Right ventricle myocardium inferior (tissue), 1 donor: ENCODE measurements at regions of chr1 and their contacts with region 1.

Region 1: DNA sequence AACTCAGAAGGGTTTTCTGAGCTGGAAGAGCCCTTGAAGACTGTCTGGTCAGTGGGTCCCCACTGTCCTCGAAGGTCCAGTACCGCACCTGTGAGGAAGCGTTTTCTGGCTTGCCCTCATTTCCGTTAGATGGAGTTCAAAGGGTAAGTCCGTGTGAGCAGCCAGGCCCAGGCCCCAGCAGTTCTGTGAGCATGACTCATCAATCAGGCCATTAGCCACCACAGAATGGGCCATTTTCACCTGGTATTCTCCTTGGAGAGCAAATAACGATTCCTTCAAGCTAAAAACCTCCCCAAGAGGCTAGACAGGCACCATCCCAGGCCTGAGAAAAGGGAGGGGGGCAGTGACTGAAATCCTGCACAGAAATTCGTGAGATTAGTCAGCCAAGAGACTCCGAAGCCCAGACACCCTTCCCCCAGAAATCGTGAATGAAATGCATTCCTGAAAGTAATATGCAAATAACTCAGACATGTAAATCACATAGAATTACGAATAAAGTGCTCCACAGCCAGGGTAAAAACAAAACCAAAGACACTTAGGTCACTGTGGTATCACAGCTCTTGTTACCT is 66.0 kb downstream of the BCAR3 start:
- DNase-seq: no peak
- ATAC-seq: no peak

Region 2: GRCh38 chr1:93567255-93567918 is 48.3 kb before region 1 on chr1:
- intact Hi-C with region 1: loop called (anchors 5 kb)
- DNase-seq: no peak
- ATAC-seq: peak; percentile 43